ENCODE measurements at regions of chr2 and their contacts with region 1.

Region 1: GRCh38 chr2:210399440-210400041 is 77.0 kb downstream of the LANCL1 start:
- DNase-seq: peak; percentile 29
- H3K4me3 ChIP-seq: no peak overlapping the region
- H3K27ac ChIP-seq: no peak overlapping the region
- H3K4me1 ChIP-seq: no peaks in the 10 kb centered on the region
- H3K27me3 ChIP-seq: no peaks in the 10 kb centered on the region
- CTCF ChIP-seq: peak; percentile 59

Region 2: DNA sequence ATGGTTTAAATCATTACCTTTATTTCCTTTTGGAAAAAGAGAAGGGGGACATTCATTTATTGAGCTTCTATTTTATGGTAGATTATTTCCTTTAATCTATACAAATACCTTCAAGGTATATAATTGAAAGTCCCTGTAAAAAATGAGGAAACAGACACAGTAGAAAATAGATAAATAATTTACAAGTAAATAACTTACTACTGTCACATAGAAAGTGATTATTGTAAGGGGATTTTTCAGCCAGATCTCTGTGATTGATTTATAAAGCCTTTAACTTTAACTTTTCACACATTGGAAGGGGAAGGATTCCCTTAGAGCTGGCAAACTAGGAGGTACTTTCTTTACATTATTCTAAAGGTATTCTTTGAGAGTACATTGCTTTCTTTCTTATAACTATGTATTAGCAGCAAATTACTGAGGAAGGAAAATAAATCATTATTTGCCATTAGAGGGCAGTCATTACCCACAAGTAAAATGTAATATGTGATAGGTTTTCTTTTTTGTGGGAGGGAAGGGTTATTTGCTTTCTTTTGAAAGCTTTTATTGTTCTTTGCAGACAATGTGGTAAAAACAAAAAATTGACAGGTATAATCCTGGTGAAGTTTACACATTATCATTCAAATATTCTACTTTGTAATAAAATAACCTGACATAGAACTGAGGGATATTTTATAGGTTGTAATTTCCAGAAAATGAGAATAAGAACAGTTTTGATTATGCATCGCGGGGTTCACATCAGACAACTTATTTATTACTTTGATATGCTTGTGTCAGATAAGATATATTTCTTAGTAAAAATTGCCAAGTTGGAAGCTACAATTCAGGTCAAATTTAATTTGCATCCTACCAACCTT is 421.9 kb before region 1 on chr2:
- CTCF ChIA-PET with region 1: no interaction called
- POLR2A ChIA-PET with region 1: no interaction called
- intact Hi-C with region 1: loop called (anchors 10 kb)
- DNase-seq: peak; percentile 60
- H3K4me3 ChIP-seq: no peak overlapping the region
- H3K27ac ChIP-seq: no peak overlapping the region
- H3K4me1 ChIP-seq: no peaks in the 10 kb centered on the region
- H3K27me3 ChIP-seq: no peaks in the 10 kb centered on the region
- CTCF ChIP-seq: peak; percentile 59

Region 3: GRCh38 chr2:210099940-210100339 is 299.6 kb before region 1 on chr2:
- CTCF ChIA-PET with region 1: no interaction called
- POLR2A ChIA-PET with region 1: no interaction called
- intact Hi-C with region 1: no loop called
- DNase-seq: no peak
- H3K4me3 ChIP-seq: no peak overlapping the region
- H3K27ac ChIP-seq: no peak overlapping the region
- H3K4me1 ChIP-seq: peaks cover 19% of the 10 kb centered on the region
- H3K27me3 ChIP-seq: no peaks in the 10 kb centered on the region
- CTCF ChIP-seq: no peak

Region 4: GRCh38 chr2:210252699-210253606 is 146.6 kb before region 1 on chr2:
- CTCF ChIA-PET with region 1: interaction called, 12 read pairs
- POLR2A ChIA-PET with region 1: interaction called, 4 read pairs
- intact Hi-C with region 1: loop called (anchors 1 kb)
- DNase-seq: no peak
- H3K4me3 ChIP-seq: no peak overlapping the region
- H3K27ac ChIP-seq: no peak overlapping the region
- H3K4me1 ChIP-seq: peaks cover 4% of the 10 kb centered on the region
- H3K27me3 ChIP-seq: no peaks in the 10 kb centered on the region
- CTCF ChIP-seq: no peak

Measured in A673 (cell line).